HEK293T (cell line): ENCODE measurements at regions of chr10 and their contacts with region 1.

Region 1: GRCh38 chr10:101018600-101019439 is 12.1 kb downstream of the PDZD7 start:
- DNase-seq: peak; percentile 94

Region 2: GRCh38 chr10:100743626-100744135 is 275.1 kb before region 1 on chr10:
- CTCF ChIA-PET with region 1: no interaction called
- POLR2A ChIA-PET with region 1: no interaction called
- DNase-seq: peak; percentile 84

Region 3: DNA sequence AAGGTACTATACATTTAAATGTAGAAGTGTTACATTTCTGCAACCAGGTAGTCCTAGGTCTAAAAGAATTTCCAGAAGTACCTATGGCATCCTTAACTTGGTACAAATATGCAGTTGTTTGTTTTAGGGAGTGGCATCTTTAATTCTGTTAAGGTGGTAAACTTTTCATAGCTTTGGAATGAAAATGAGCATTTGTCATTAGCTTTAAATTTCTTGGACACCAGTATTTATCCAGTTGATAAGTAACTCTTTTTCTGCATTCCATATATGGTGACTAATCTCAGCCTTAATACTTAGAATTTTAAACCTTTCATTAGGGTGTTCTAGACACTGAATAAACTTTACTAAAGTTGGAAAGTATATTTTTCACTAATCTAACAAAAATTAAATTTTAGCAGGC is 95.2 kb before region 1 on chr10:
- CTCF ChIA-PET with region 1: no interaction called
- POLR2A ChIA-PET with region 1: no interaction called
- DNase-seq: no peak

Region 4: DNA sequence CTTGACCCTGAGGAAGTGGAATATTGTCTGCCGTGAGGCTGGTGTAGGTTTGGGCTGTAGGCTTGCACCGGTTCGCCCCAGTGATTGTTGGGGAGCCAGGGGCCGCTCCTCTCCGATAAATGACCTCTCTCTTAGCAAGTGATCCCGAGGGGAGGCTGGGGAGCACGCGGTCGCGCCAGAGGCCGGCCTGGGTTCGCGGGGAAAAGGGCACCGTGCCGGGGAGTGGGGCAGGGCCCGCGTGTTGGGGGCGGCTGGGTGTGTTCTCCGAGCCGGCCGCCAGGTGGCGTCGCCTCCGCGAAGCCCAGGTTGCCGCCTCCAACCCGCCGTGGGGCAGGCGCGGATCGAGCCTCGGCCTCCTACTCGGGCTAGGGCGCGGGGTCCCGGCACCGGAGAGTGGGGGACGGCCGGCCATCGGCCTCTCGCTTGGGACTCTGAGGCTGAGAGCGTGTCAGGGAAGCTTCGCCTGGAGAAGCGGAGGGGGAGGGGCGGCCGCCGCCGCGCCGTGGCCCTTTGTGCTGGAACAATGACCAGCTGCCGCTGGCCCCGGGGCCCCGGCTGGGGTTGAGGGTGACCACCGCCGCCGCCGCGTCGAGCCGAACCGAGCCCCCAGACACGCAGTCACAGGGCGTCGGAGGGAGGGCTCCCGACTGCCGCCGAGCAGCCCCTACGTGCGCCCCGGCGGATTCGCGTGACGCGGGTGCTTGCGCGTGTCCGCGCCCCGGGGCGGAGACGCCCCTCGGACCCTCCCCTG is 19.7 kb before region 1 on chr10:
- CTCF ChIA-PET with region 1: interaction called, 50 read pairs
- POLR2A ChIA-PET with region 1: interaction called, 20 read pairs
- DNase-seq: peak; percentile 93

Region 5: GRCh38 chr10:101031128-101031795 is 12.4 kb after region 1 on chr10 and contains the starts of genes PDZD7 and SFXN3:
- CTCF ChIA-PET with region 1: interaction called, 35 read pairs
- POLR2A ChIA-PET with region 1: interaction called, 9 read pairs
- DNase-seq: peak; percentile 100

Region 6: DNA sequence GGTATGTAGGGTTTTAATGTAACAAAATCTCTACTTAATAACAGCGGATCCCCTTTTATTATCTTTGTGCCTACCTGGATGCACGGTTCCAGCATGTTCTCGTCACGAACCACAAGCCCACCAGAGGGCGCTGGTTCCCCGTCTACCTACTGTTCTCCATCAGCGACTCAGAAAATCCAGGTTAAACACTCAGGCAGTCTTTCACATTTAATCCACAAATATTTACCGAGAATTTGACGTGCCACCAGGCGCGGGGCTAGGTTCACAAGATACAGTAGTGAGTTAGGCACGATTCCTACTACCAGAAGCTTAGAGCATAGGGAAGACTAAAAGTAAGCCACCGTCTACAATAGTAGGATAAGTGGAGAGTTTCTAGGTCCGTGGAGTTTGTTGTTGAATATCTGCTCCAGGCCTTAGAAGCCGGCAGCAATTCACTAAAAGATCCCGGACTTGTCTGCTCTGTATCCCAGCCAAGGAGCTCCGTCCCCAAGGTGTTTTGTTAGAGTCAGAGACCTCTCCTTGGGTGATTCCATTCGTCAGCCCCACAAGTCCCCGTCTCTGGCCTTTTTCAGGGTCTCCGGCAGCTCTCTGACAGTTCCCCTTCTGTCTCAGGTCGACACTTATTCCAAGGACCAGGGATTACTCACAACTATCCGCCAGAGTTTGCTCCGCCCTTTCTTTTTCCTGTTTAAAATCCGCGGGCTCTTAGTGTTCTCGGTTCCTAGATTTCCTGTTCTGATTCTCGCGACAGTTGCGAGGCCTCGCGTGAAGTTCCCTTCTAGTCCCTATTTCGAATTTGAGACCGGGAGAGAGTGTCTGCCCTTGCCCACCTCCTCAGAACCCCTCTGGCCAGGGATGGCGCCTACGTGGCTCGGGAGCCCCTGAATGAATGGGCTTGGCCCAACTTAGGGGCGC is 41.5 kb after region 1 on chr10:
- CTCF ChIA-PET with region 1: interaction called, 9 read pairs
- POLR2A ChIA-PET with region 1: interaction called, 14 read pairs
- DNase-seq: peak; percentile 88

Region 7: GRCh38 chr10:101067356-101068083 is 48.7 kb after region 1 on chr10:
- CTCF ChIA-PET with region 1: interaction called, 11 read pairs
- POLR2A ChIA-PET with region 1: interaction called, 3 read pairs
- DNase-seq: peak; percentile 88